ENCODE measurements at regions of chr3 and their contacts with region 1.

Region 1: GRCh38 chr3:9302425-9303181 is 53.2 kb upstream of the SRGAP3 start:
- DNase-seq: peak; percentile 85
- H3K4me3 ChIP-seq: peak overlapping the region; percentile 15 to 45 (median 44)
- H3K27ac ChIP-seq: peak overlapping the region; percentile 53
- H3K4me1 ChIP-seq: peaks cover 22% of the 10 kb centered on the region
- H3K27me3 ChIP-seq: no peaks in the 10 kb centered on the region
- CTCF ChIP-seq: peak; percentile 75 to 88

Region 2: DNA sequence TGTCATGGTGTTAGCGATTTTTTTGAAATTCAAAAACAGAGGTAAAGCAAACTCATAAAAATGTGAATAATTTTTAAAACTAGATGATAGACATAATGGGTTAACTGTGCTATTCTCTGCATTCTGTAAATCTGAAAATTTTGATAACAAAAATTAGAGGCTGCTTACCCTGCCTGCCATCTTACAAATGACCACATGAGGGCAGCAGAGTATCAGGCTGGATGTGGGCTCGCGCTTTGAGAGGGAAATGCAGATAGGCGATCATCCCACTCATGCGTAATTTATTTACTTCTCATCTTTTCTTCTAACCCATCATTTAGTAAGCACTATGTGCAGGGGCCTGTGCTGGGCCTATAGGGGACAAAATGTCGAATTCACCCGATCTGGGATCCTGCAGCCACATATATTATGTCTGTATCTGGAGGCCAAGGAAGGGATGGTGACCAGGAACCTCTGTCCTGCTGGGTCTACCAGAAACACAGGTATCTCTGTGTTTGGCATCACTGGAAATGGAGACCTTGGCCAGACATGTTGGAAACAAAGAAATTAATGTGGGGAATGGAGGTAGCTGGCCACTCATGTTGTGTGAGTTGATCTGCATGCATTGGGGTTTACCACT is 331.5 kb before region 1 on chr3:
- CTCF ChIA-PET with region 1: no interaction called
- dilution Hi-C with region 1: loop called (anchors 5 kb)
- in situ Hi-C with region 1: loop called (anchors 5 to 10 kb)
- intact Hi-C with region 1: loop called (anchors 1 kb)
- DNase-seq: peak; percentile 48
- H3K4me3 ChIP-seq: no peak overlapping the region
- H3K27ac ChIP-seq: no peak overlapping the region
- H3K4me1 ChIP-seq: no peaks in the 10 kb centered on the region
- H3K27me3 ChIP-seq: no peaks in the 10 kb centered on the region
- CTCF ChIP-seq: peak; percentile 98 to 99

Region 3: DNA sequence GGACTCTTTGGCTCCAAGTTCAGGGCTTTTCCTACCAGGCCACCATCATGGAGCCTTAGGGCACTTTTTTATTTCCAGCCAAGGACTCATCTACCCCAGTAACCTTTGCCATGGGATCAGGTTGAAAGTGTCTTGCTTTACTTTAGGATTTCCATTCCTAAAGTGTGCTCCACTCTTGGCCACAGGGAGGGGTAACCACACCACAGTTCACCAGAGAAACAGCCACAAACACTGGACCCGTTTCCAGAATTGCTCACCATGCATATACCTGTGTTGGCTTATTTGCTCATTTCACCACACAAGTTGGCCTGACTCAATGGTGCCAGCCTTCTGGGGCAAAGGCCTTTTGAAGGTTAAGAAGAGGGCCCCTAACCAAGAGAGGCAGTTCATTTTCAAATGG is 268.7 kb before region 1 on chr3:
- CTCF ChIA-PET with region 1: no interaction called
- dilution Hi-C with region 1: no loop called
- in situ Hi-C with region 1: no loop called
- intact Hi-C with region 1: loop called (anchors 1 kb)
- DNase-seq: no peak
- H3K4me3 ChIP-seq: no peak overlapping the region
- H3K27ac ChIP-seq: no peak overlapping the region
- H3K4me1 ChIP-seq: no peaks in the 10 kb centered on the region
- H3K27me3 ChIP-seq: no peaks in the 10 kb centered on the region
- CTCF ChIP-seq: no peak

Region 4: GRCh38 chr3:9168241-9168741 is 134.3 kb before region 1 on chr3:
- CTCF ChIA-PET with region 1: no interaction called
- dilution Hi-C with region 1: no loop called
- in situ Hi-C with region 1: no loop called
- intact Hi-C with region 1: loop called (anchors 2 kb)
- DNase-seq: peak; percentile 70
- H3K4me3 ChIP-seq: no peak overlapping the region
- H3K27ac ChIP-seq: peak overlapping the region; percentile 96
- H3K4me1 ChIP-seq: peaks cover 56% of the 10 kb centered on the region
- H3K27me3 ChIP-seq: no peaks in the 10 kb centered on the region
- CTCF ChIP-seq: no peak

Measured in mammary epithelial cell (primary cell).